CD8-positive, alpha-beta T cell (primary cell): ENCODE measurements at regions of chr12 and their contacts with region 1.

Region 1: DNA sequence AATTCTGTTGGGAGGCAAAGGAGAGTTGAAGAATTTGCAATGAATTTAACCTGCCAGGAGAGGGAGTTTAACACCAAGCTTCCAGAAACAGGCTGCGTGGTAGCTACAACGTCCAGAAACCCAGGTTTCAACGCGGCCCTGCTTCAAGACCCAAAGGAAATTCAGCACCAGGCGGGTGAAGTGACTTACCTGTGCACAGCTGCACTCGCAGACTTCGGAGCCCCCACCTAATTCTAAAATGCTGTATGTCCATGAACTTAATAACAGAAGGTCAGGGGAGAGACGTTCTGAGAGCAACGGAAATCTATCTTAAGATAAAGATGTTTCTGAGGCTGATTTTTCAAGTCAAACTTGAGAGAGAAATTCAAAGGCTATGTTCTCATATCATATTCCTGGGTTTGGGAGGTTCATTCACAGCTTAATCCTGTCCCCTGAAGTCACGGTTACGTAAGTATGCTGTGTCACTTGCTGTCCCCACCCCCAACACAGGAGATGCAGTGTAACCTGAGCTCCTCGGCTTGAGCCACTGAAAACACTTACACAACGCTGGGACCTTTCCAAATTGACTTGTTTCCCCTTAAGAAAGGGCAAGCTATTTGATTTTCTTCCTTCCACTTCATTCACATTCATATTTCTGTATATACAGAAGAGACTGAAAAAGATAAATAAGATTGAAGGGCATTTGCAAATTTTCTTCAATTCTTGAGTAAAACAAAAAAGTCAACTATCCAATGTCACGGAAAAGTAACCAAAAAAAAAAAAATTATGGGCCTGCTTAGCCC is 22.7 kb downstream of the CLIP1 start:
- DNase-seq: peak in 8 of 9 experiments; percentile 16 to 79 (median 54)
- ATAC-seq: peak; percentile 84
- H3K4me3 ChIP-seq: no peak overlapping the region
- H3K4me3 Mint-ChIP-seq: no peak overlapping the region
- H3K27ac ChIP-seq: no peak overlapping the region
- H3K27ac Mint-ChIP-seq: peak overlapping the region; percentile 78
- H3K4me1 ChIP-seq: peaks cover 6% of the 10 kb centered on the region
- H3K4me1 Mint-ChIP-seq: peaks cover 21% of the 10 kb centered on the region
- H3K27me3 ChIP-seq: no peaks in the 10 kb centered on the region
- H3K27me3 Mint-ChIP-seq: no peaks in the 10 kb centered on the region
- CTCF ChIP-seq: peak; percentile 74

Region 2: GRCh38 chr12:122366685-122367475 is 32.9 kb before region 1 on chr12:
- CTCF ChIA-PET with region 1: no interaction called
- POLR2A ChIA-PET with region 1: no interaction called
- intact Hi-C with region 1: loop called in 1 of 2 experiments (anchors 1 kb)
- DNase-seq: no peak
- ATAC-seq: no peak
- H3K4me3 ChIP-seq: no peak overlapping the region
- H3K4me3 Mint-ChIP-seq: no peak overlapping the region
- H3K27ac ChIP-seq: no peak overlapping the region
- H3K27ac Mint-ChIP-seq: no peak overlapping the region
- H3K4me1 ChIP-seq: no peaks in the 10 kb centered on the region
- H3K4me1 Mint-ChIP-seq: peaks cover 12% of the 10 kb centered on the region
- H3K27me3 ChIP-seq: no peaks in the 10 kb centered on the region
- H3K27me3 Mint-ChIP-seq: no peaks in the 10 kb centered on the region
- CTCF ChIP-seq: no peak

Region 3: DNA sequence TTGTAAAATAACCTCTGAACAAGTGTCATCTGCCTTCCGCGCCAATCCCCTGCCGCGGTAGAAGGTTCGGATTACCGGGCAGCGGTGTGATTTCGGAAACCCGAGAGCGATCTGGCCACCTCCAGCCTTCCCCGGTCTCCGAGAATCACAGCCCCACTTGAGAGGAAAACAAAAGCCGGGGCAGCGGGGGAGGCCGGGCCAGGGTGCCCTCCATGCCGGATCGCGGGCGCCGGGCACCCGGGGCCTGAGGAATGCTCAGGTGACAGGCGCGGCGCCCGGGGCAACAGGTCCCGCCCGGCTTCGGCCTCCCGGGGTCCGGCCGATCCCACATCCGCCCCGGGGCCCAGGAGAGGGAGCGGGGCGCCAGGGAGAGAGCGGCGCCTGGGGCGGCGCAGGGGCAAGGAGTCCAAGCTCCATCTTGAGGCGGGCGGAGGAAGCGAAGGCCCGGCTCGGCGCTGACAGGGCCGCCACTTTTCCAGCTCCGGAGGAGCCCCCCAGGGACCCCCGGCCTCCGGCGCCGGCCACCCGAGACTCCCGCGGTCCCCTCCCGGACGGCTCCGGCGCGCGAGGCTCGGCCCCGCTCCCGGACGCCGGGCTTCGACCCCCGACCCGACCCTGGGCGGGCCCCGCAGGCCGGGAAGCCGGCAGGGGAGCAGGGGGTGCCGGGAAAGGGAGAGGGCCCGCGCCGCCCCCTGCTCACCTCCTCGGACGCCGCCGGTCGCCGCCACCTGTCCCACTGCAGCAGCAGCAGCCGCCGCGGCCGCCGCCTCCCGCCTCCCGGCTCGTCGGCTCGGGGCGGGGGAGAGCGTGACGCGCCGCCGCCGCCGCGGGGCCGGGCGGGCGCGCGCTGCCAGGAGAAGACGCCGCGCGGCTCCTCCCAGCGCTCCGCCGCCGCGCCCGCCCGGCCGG is 22.3 kb after region 1 on chr12 and contains the start of gene CLIP1:
- CTCF ChIA-PET with region 1: interaction called, 28 read pairs
- POLR2A ChIA-PET with region 1: interaction called, 4 read pairs
- intact Hi-C with region 1: loop called (anchors 1 kb)
- DNase-seq: peak; percentile 16 to 79 (median 55)
- ATAC-seq: peak; percentile 80
- H3K4me3 ChIP-seq: peak within 1 kb of the TSS; percentile 49 to 68
- H3K4me3 Mint-ChIP-seq: peak within 1 kb of the TSS; percentile 91
- H3K27ac ChIP-seq: peak within 1 kb of the TSS; percentile 49 to 71
- H3K27ac Mint-ChIP-seq: peak within 1 kb of the TSS; percentile 84
- H3K4me1 ChIP-seq: peaks cover 19% of the 10 kb centered on the region
- H3K4me1 Mint-ChIP-seq: peaks cover 30% of the 10 kb centered on the region
- H3K27me3 ChIP-seq: no peaks in the 10 kb centered on the region
- H3K27me3 Mint-ChIP-seq: no peaks in the 10 kb centered on the region
- CTCF ChIP-seq: peak; percentile 52
- total RNA-seq, gene CLIP1: 48.6 to 49.6 TPM

Region 4: DNA sequence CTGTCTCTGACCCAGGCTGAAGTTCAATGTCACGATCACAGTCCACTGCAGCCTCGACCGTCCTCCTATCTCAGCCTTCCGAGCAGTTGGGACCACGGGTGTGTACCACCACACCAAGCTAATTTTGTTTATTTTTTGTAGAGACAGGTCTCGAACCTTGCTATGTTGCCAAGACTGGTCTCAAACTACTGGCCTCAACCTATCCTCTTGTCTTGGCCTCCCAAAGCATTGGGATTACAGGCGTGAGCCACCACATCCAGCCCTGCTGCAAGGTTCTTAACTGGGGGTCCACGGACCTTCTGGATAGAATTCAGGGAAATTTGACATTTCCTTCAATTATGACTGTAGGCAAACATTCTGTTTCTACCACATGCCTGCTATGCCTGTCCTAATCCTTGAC is 64.0 kb after region 1 on chr12:
- CTCF ChIA-PET with region 1: interaction called, 264 read pairs
- POLR2A ChIA-PET with region 1: interaction called, 4 read pairs
- intact Hi-C with region 1: no loop called
- DNase-seq: no peak
- ATAC-seq: no peak
- H3K4me3 ChIP-seq: no peak overlapping the region
- H3K4me3 Mint-ChIP-seq: no peak overlapping the region
- H3K27ac ChIP-seq: no peak overlapping the region
- H3K27ac Mint-ChIP-seq: no peak overlapping the region
- H3K4me1 ChIP-seq: no peaks in the 10 kb centered on the region
- H3K4me1 Mint-ChIP-seq: no peaks in the 10 kb centered on the region
- H3K27me3 ChIP-seq: no peaks in the 10 kb centered on the region
- H3K27me3 Mint-ChIP-seq: no peaks in the 10 kb centered on the region
- CTCF ChIP-seq: no peak

Region 5: DNA sequence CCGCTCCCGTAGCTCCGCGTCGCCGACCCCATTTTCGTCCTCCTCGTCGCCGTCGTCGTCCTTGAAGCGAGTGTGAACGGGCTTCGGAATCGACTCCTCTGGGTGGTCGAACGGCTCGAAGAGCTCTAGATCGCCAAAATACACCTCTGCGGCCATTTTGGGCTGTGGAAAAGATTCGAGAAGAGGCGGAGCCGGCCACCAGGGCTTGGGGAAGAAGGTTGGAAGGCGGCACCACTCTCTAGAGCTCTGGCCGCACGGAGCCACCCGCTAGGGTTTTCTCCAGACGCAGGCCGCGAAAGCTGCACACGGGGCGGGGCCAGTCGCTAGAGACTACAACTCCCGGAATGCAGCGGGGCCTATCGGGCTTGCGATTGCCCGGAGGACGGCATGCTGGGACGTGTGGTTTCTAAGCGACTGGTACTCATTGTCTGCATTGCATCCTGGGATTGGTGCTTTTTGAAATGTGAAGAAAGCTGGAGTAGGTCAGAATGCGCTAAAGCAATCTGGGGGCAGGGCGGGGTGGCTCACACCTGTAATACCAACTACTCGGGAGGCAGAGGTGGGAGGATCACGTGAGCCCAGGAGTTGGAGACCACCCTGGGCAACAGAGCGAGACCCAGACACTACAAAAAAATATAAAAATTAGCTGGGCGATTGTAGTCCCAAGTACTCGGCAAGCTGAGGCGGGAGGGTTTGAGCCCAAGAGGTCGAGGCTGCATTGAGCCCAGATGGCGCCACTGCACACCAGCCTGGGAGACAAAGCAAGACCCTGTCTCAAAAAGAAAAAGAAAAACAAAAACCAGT is 101.1 kb after region 1 on chr12 and contains the start of gene ZCCHC8:
- CTCF ChIA-PET with region 1: interaction called, 12 read pairs
- POLR2A ChIA-PET with region 1: interaction called, 4 read pairs
- intact Hi-C with region 1: no loop called
- DNase-seq: peak; percentile 92 to 98 (median 96)
- ATAC-seq: peak; percentile 92
- H3K4me3 ChIP-seq: peak within 1 kb of the TSS; percentile 74 to 80
- H3K4me3 Mint-ChIP-seq: peak within 1 kb of the TSS; percentile 97
- H3K27ac ChIP-seq: peak within 1 kb of the TSS; percentile 90 to 92
- H3K27ac Mint-ChIP-seq: peak within 1 kb of the TSS; percentile 99
- H3K4me1 ChIP-seq: peaks cover 17% of the 10 kb centered on the region
- H3K4me1 Mint-ChIP-seq: peaks cover 40% of the 10 kb centered on the region
- H3K27me3 ChIP-seq: no peaks in the 10 kb centered on the region
- H3K27me3 Mint-ChIP-seq: no peaks in the 10 kb centered on the region
- CTCF ChIP-seq: no peak
- total RNA-seq, gene ZCCHC8: 53.4 to 55.6 TPM